BJ (cell line): ENCODE measurements at regions of chr20 and their contacts with region 1.

Region 1: GRCh38 chr20:10521068-10521831 is 86.1 kb downstream of the SLX4IP start:
- DNase-seq: no peak
- H3K4me3 ChIP-seq: no peak overlapping the region
- H3K27me3 ChIP-seq: no peaks in the 10 kb centered on the region
- CTCF ChIP-seq: no peak

Region 2: DNA sequence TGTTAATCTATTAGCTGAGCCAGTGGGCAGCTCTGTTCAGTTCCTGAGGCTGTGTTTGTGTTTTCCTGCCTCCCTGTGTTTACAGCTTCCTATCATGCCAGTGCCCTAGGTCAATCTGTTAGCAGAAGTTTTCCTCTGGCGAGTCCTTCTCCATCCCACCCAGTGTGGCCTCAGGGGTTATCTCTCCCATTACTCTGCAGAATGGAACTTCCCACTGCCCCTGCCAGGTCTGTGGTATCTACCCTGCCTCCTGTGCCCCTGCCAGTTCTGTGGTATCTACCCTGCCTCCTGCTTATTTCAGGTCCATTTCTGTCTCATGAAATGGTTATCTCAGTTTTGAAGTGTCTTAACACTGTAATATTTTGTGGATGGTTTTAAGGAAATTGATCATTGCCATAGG is 23.1 kb before region 1 on chr20:
- CTCF ChIA-PET with region 1: no interaction called
- POLR2A ChIA-PET with region 1: no interaction called
- DNase-seq: no peak
- H3K4me3 ChIP-seq: no peak overlapping the region
- H3K27me3 ChIP-seq: no peaks in the 10 kb centered on the region; the same call in 1 of the 2 replicates
- CTCF ChIP-seq: no peak

Region 3: DNA sequence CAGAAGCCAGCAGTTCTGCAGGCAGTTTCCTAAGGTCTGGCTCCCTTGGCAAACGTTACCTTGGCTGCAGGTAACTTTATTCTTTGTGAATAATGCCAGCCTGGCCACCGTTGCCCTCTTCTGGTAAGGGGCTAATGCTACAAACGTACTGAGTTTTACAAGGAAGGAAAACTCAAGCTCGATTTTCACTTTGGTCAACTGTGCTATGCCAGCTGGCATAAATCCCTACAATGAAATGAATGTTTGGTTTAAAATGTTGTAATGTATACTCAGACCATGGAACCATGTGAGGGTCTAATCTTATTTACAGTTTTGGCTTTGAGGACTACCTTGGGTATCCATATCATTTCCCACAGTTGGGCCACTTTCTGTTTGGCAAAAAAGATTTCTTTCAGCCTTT is 15.3 kb after region 1 on chr20:
- CTCF ChIA-PET with region 1: interaction called, 22 read pairs
- POLR2A ChIA-PET with region 1: no interaction called
- DNase-seq: no peak
- H3K4me3 ChIP-seq: no peak overlapping the region
- H3K27me3 ChIP-seq: no peaks in the 10 kb centered on the region
- CTCF ChIP-seq: peak; percentile 50